ENCODE measurements at regions of chr19 and their contacts with region 1.

Region 1: GRCh38 chr19:49808711-49809159 is 4.4 kb downstream of the FUZ start:
- DNase-seq: peak; percentile 92 to 94
- ATAC-seq: peak; percentile 44 to 57
- H3K4me3 ChIP-seq: peak overlapping the region; percentile 67 to 87 (median 80)
- H3K27ac ChIP-seq: peak overlapping the region; percentile 91 to 96 (median 94)
- H3K4me1 ChIP-seq: peaks cover 17 to 21% of the 10 kb centered on the region in 2 donors
- H3K27me3 ChIP-seq: no peaks in the 10 kb centered on the region
- CTCF ChIP-seq: peak in 1 of 5 experiments; percentile 14
- POLR2A ChIP-seq: peak; percentile 77 to 82

Region 2: GRCh38 chr19:49718511-49718910 is 90.2 kb before region 1 on chr19:
- in situ Hi-C with region 1: no loop called
- intact Hi-C with region 1: loop called (anchors 2 kb)
- DNase-seq: no peak
- ATAC-seq: no peak
- H3K4me3 ChIP-seq: no peak overlapping the region
- H3K27ac ChIP-seq: no peak overlapping the region
- H3K4me1 ChIP-seq: no peaks in the 10 kb centered on the region
- H3K27me3 ChIP-seq: no peaks in the 10 kb centered on the region
- CTCF ChIP-seq: no peak
- POLR2A ChIP-seq: no peak

Region 3: GRCh38 chr19:49746206-49747091 is 62.3 kb before region 1 on chr19:
- in situ Hi-C with region 1: no loop called
- intact Hi-C with region 1: no loop called
- DNase-seq: peak in 1 of 2 donors; percentile 37
- ATAC-seq: no peak
- H3K4me3 ChIP-seq: no peak overlapping the region
- H3K27ac ChIP-seq: no peak overlapping the region
- H3K4me1 ChIP-seq: no peaks in the 10 kb centered on the region
- H3K27me3 ChIP-seq: no peaks in the 10 kb centered on the region
- CTCF ChIP-seq: no peak
- POLR2A ChIP-seq: no peak

Region 4: DNA sequence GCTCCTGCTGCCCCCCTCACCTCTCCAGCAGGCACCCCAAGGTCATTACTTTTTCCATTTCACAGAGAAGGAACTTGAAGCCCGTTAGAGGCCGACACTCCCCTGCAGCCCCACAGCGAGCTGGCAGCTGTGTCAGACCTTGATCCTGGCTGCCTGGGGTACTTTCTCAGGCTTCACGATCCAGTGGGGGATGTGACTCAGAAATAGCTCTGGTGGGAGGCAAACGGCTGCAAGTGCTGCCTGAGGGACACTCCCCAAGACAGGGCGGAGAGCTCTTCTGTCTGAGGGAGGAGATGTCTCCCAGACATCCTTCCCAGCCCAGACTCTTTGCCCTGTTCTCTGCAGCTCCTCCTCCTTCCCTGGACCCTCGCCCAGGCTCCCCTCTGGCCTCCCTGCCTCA is 50.4 kb before region 1 on chr19:
- in situ Hi-C with region 1: no loop called
- intact Hi-C with region 1: no loop called
- DNase-seq: no peak
- ATAC-seq: no peak
- H3K4me3 ChIP-seq: no peak overlapping the region
- H3K27ac ChIP-seq: no peak overlapping the region
- H3K4me1 ChIP-seq: no peaks in the 10 kb centered on the region
- H3K27me3 ChIP-seq: no peaks in the 10 kb centered on the region
- CTCF ChIP-seq: no peak
- POLR2A ChIP-seq: no peak